Adrenal gland (tissue), 19 donors: ENCODE measurements at regions of chr6 and their contacts with region 1.

Region 1: DNA sequence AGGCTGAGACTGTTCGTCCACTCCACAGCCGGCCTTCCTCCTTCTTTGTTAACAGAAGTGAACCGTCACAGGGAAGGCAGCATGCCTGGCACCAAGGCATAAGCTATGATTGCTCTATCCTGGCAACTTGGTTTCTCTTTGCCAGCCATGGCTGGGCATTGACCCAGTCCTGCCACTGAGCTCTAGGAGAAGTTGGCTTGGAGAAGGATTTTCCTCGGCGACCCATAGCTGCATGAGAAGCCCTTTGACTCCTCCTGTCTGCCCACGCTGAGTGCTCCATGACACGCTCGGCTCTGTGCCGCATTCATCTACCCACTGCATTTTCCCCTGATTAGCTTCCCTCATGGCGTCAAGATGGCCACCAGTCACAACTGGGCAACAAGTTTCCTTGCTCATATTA is 111.8 kb upstream of the EXOC2 start:
- DNase-seq: no peak
- H3K4me3 ChIP-seq: no peak overlapping the region
- H3K27ac ChIP-seq: no peak overlapping the region
- H3K4me1 ChIP-seq: no peaks in the 10 kb centered on the region
- H3K27me3 ChIP-seq: no peaks in the 10 kb centered on the region
- CTCF ChIP-seq: no peak
- POLR2A ChIP-seq: no peak

Region 2: GRCh38 chr6:1390133-1390804 is 585.5 kb after region 1 on chr6:
- intact Hi-C with region 1: loop called in 1 of 2 experiments (anchors 5 kb)
- DNase-seq: peak in 1 of 7 donors; percentile 10
- H3K4me3 ChIP-seq: peak overlapping the region in 1 of 4 donors; percentile 48
- H3K27ac ChIP-seq: peak overlapping the region in 1 of 5 donors; percentile 40
- H3K4me1 ChIP-seq: no peaks in the 10 kb centered on the region
- H3K27me3 ChIP-seq: peaks cover 78% of the 10 kb centered on the region
- CTCF ChIP-seq: no peak
- POLR2A ChIP-seq: no peak